ENCODE measurements at regions of chr12 and their contacts with region 1.

Region 1: GRCh38 chr12:90499795-90500194 is 455.2 kb downstream of the CCER1 start:
- DNase-seq: no peak
- H3K4me3 ChIP-seq: no peak overlapping the region
- H3K27ac ChIP-seq: no peak overlapping the region
- H3K4me1 ChIP-seq: no peaks in the 10 kb centered on the region
- H3K27me3 ChIP-seq: no peaks in the 10 kb centered on the region
- CTCF ChIP-seq: no peak

Region 2: GRCh38 chr12:90546508-90546907 is 46.7 kb after region 1 on chr12:
- CTCF ChIA-PET with region 1: no interaction called
- POLR2A ChIA-PET with region 1: no interaction called
- intact Hi-C with region 1: no loop called
- DNase-seq: no peak
- H3K4me3 ChIP-seq: no peak overlapping the region
- H3K27ac ChIP-seq: no peak overlapping the region
- H3K4me1 ChIP-seq: peaks cover 10% of the 10 kb centered on the region
- H3K27me3 ChIP-seq: no peaks in the 10 kb centered on the region
- CTCF ChIP-seq: no peak

Region 3: DNA sequence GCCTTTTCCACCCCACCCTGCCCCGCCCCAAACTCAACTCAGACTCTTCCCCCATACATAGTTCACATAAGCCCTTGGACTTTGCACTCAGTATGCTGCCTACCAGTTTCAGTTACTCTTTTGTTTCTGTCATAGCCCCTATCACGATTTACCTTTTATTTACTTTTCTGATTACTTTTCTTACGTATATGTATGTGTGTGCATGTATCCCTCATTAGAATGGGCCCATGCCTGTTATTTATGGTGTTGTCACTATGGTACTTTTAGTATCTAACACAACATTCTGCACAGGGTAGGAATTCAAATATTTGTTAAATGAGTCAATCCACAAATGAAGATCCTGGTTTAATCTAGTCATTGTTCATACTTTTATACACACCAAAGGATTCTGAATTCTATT is 628.0 kb after region 1 on chr12:
- CTCF ChIA-PET with region 1: no interaction called
- POLR2A ChIA-PET with region 1: interaction called, 15 read pairs
- intact Hi-C with region 1: no loop called
- DNase-seq: no peak
- H3K4me3 ChIP-seq: no peak overlapping the region
- H3K27ac ChIP-seq: no peak overlapping the region
- H3K4me1 ChIP-seq: no peaks in the 10 kb centered on the region
- H3K27me3 ChIP-seq: no peaks in the 10 kb centered on the region
- CTCF ChIP-seq: no peak